GM12878 (cell line): ENCODE measurements at regions of chr20 and their contacts with region 1.

Region 1: GRCh38 chr20:6663104-6663503 is 104.4 kb upstream of the BMP2 start:
- DNase-seq: no peak
- ATAC-seq: peak; percentile 72
- H3K4me3 ChIP-seq: no peak overlapping the region
- H3K27ac ChIP-seq: no peak overlapping the region
- H3K4me1 ChIP-seq: no peaks in the 10 kb centered on the region
- H3K27me3 ChIP-seq: no peaks in the 10 kb centered on the region
- CTCF ChIP-seq: no peak
- EP300 ChIP-seq: no peak; a peak in 1 of 4 replicates
- POLR2A ChIP-seq: no peak
- RAD21 ChIP-seq: no peak

Region 2: GRCh38 chr20:5569021-5569420 is 1094.1 kb before region 1 on chr20:
- CTCF ChIA-PET with region 1: no interaction called
- POLR2A ChIA-PET with region 1: no interaction called
- RAD21 ChIA-PET with region 1: no interaction called
- SMC1A ChIA-PET with region 1: no interaction called
- in situ Hi-C with region 1: no loop called
- intact Hi-C with region 1: no loop called
- DNase-seq: no peak
- ATAC-seq: peak; percentile 85
- H3K4me3 ChIP-seq: no peak overlapping the region
- H3K27ac ChIP-seq: no peak overlapping the region
- H3K4me1 ChIP-seq: no peaks in the 10 kb centered on the region
- H3K27me3 ChIP-seq: no peaks in the 10 kb centered on the region
- CTCF ChIP-seq: peak; percentile 34 to 62 (median 38); a peak in 5 of 6 replicates
- EP300 ChIP-seq: no peak
- POLR2A ChIP-seq: no peak
- RAD21 ChIP-seq: peak; percentile 78

Region 3: DNA sequence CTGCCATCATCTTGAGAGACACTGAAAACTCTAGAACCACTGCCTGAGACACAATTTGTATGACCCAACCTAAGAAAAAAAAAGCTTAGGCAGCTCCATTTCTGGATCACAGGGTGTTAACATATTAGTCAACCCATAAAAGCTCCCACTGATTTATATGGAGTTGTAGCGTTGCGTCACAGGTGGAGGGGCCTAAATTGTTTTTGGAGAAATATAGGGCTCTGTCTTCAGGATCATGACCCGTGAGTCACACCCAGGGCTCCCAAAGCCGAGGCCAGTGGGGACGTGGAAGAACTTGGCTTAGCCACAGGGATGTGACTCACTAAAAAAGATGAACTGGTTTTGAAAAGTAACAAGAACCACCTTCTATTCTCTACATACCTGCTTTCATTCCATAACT is 12.1 kb before region 1 on chr20:
- CTCF ChIA-PET with region 1: interaction called, 9 read pairs
- POLR2A ChIA-PET with region 1: no interaction called
- RAD21 ChIA-PET with region 1: interaction called, 13 read pairs
- SMC1A ChIA-PET with region 1: interaction called, 54 read pairs
- in situ Hi-C with region 1: no loop called
- intact Hi-C with region 1: no loop called
- DNase-seq: no peak
- ATAC-seq: peak; percentile 19
- H3K4me3 ChIP-seq: no peak overlapping the region
- H3K27ac ChIP-seq: no peak overlapping the region
- H3K4me1 ChIP-seq: no peaks in the 10 kb centered on the region
- H3K27me3 ChIP-seq: no peaks in the 10 kb centered on the region
- CTCF ChIP-seq: no peak
- EP300 ChIP-seq: no peak
- POLR2A ChIP-seq: no peak
- RAD21 ChIP-seq: no peak

Region 4: DNA sequence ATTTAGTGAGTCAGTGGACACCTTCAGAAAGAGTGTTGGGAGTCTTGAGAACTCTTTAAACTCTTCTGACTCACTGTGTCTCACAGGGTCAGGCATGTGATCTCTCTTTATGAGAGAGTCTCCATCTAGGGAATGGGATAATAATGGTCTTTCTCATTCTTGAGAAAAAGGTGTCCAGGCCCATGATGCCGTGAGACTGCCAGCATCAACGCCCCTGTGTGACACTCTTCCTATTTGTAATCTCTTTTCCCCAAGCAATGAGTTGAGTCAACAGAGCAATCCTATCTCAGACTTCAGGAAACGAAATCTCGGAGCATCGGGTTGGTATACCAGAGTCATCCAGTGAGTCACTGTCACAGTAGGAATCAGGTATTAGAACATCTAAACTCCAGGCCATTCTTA is 22.1 kb after region 1 on chr20:
- CTCF ChIA-PET with region 1: interaction called, 8 read pairs
- POLR2A ChIA-PET with region 1: no interaction called
- RAD21 ChIA-PET with region 1: interaction called, 3 read pairs
- SMC1A ChIA-PET with region 1: interaction called, 16 read pairs
- in situ Hi-C with region 1: no loop called
- intact Hi-C with region 1: no loop called
- DNase-seq: no peak
- ATAC-seq: no peak
- H3K4me3 ChIP-seq: no peak overlapping the region
- H3K27ac ChIP-seq: no peak overlapping the region
- H3K4me1 ChIP-seq: no peaks in the 10 kb centered on the region
- H3K27me3 ChIP-seq: no peaks in the 10 kb centered on the region
- CTCF ChIP-seq: no peak
- EP300 ChIP-seq: no peak
- POLR2A ChIP-seq: no peak
- RAD21 ChIP-seq: no peak

Region 5: GRCh38 chr20:6692568-6693173 is 29.6 kb after region 1 on chr20:
- CTCF ChIA-PET with region 1: interaction called, 11 read pairs
- POLR2A ChIA-PET with region 1: no interaction called
- RAD21 ChIA-PET with region 1: interaction called, 3 read pairs
- SMC1A ChIA-PET with region 1: interaction called, 4 read pairs
- in situ Hi-C with region 1: no loop called
- intact Hi-C with region 1: no loop called
- DNase-seq: no peak
- ATAC-seq: peak; percentile 91
- H3K4me3 ChIP-seq: no peak overlapping the region
- H3K27ac ChIP-seq: no peak overlapping the region
- H3K4me1 ChIP-seq: no peaks in the 10 kb centered on the region
- H3K27me3 ChIP-seq: no peaks in the 10 kb centered on the region
- CTCF ChIP-seq: no peak; a peak in 1 of 6 replicates
- EP300 ChIP-seq: no peak
- POLR2A ChIP-seq: no peak
- RAD21 ChIP-seq: no peak

Region 6: GRCh38 chr20:6708010-6708409 is 44.9 kb after region 1 on chr20:
- CTCF ChIA-PET with region 1: no interaction called
- POLR2A ChIA-PET with region 1: no interaction called
- RAD21 ChIA-PET with region 1: interaction called, 4 read pairs
- SMC1A ChIA-PET with region 1: interaction called, 15 read pairs
- in situ Hi-C with region 1: no loop called
- intact Hi-C with region 1: no loop called
- DNase-seq: no peak
- ATAC-seq: peak; percentile 8; the same call in 2 of the 3 replicates
- H3K4me3 ChIP-seq: no peak overlapping the region
- H3K27ac ChIP-seq: no peak overlapping the region
- H3K4me1 ChIP-seq: no peaks in the 10 kb centered on the region
- H3K27me3 ChIP-seq: no peaks in the 10 kb centered on the region
- CTCF ChIP-seq: no peak
- EP300 ChIP-seq: no peak
- POLR2A ChIP-seq: no peak
- RAD21 ChIP-seq: no peak